ENCODE measurements at regions of chr16 and their contacts with region 1.

Region 1: GRCh38 chr16:17467923-17468540 is 2.7 kb downstream of the XYLT1 start:
- DNase-seq: no peak
- ATAC-seq: no peak
- H3K4me3 Mint-ChIP-seq: peak overlapping the region; percentile 83
- H3K27ac Mint-ChIP-seq: no peak overlapping the region
- H3K4me1 Mint-ChIP-seq: peaks cover 54% of the 10 kb centered on the region
- H3K27me3 Mint-ChIP-seq: no peaks in the 10 kb centered on the region
- CTCF ChIP-seq: no peak

Region 2: GRCh38 chr16:17070882-17071592 is 397.0 kb before region 1 on chr16:
- CTCF ChIA-PET with region 1: no interaction called
- POLR2A ChIA-PET with region 1: no interaction called
- intact Hi-C with region 1: loop called (anchors 5 kb)
- DNase-seq: peak; percentile 67
- ATAC-seq: peak; percentile 82
- H3K4me3 Mint-ChIP-seq: peak overlapping the region; percentile 88
- H3K27ac Mint-ChIP-seq: peak overlapping the region; percentile 98
- H3K4me1 Mint-ChIP-seq: peaks cover 59% of the 10 kb centered on the region
- H3K27me3 Mint-ChIP-seq: no peaks in the 10 kb centered on the region
- CTCF ChIP-seq: no peak

Region 3: GRCh38 chr16:17211797-17212196 is 256.2 kb before region 1 on chr16:
- CTCF ChIA-PET with region 1: interaction called, 4 read pairs
- POLR2A ChIA-PET with region 1: no interaction called
- intact Hi-C with region 1: loop called (anchors 5 kb)
- DNase-seq: no peak
- ATAC-seq: peak; percentile 34
- H3K4me3 Mint-ChIP-seq: no peak overlapping the region
- H3K27ac Mint-ChIP-seq: no peak overlapping the region
- H3K4me1 Mint-ChIP-seq: peaks cover 10% of the 10 kb centered on the region
- H3K27me3 Mint-ChIP-seq: no peaks in the 10 kb centered on the region
- CTCF ChIP-seq: no peak

Region 4: DNA sequence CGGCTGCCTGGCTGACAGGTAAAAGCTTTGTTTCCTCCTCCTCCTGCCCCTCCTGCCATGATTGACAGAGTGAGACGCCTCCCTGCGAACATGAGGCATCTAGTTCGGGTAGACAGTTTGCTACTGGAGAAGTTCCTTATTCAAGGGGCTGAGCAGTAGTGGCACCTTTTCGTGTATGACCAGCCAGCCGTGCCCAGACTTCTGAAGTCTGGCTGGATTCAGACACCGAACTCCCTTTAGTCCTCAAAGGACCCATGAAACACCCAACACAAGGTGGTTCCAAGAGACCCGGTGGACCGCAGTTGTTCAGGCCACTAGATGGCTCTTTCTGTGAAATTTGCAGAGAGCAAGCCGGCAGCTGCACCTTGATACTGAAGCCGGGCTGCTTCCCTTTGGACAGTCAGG is 190.1 kb before region 1 on chr16:
- CTCF ChIA-PET with region 1: interaction called, 24 read pairs
- POLR2A ChIA-PET with region 1: no interaction called
- intact Hi-C with region 1: loop called (anchors 1 kb)
- DNase-seq: peak; percentile 25
- ATAC-seq: peak; percentile 55
- H3K4me3 Mint-ChIP-seq: peak overlapping the region; percentile 32
- H3K27ac Mint-ChIP-seq: no peak overlapping the region
- H3K4me1 Mint-ChIP-seq: peaks cover 77% of the 10 kb centered on the region
- H3K27me3 Mint-ChIP-seq: no peaks in the 10 kb centered on the region
- CTCF ChIP-seq: no peak

Measured in activated B cell treated with CpG ODN at 0.5 μM for 24 hours (primary cell).